ENCODE measurements at regions of chr10 and their contacts with region 1.

Region 1: GRCh38 chr10:12195603-12196506 is at the starts of genes CDC123 and NUDT5:
- DNase-seq: peak; percentile 81
- ATAC-seq: peak; percentile 94
- H3K4me3 ChIP-seq: peak within 1 kb of the TSS; percentile 84
- H3K27ac ChIP-seq: peak within 1 kb of the TSS; percentile 98
- H3K4me1 ChIP-seq: peaks cover 4% of the 10 kb centered on the region; the same call in 1 of the 2 replicates
- H3K27me3 ChIP-seq: no peaks in the 10 kb centered on the region
- CTCF ChIP-seq: peak in 1 of 3 experiments; percentile 9; a peak in 1 of 6 replicates
- EP300 ChIP-seq: 0 out of 4 replicates have a peak, but pooled peaks of 1 of the 2 experiments have one; percentile 28
- POLR2A ChIP-seq: peak; percentile 95
- RAD21 ChIP-seq: no peak
- polyA plus RNA-seq, gene CDC123: 162 to 226 TPM
- polyA plus RNA-seq, gene NUDT5: 293 to 345 TPM

Region 2: DNA sequence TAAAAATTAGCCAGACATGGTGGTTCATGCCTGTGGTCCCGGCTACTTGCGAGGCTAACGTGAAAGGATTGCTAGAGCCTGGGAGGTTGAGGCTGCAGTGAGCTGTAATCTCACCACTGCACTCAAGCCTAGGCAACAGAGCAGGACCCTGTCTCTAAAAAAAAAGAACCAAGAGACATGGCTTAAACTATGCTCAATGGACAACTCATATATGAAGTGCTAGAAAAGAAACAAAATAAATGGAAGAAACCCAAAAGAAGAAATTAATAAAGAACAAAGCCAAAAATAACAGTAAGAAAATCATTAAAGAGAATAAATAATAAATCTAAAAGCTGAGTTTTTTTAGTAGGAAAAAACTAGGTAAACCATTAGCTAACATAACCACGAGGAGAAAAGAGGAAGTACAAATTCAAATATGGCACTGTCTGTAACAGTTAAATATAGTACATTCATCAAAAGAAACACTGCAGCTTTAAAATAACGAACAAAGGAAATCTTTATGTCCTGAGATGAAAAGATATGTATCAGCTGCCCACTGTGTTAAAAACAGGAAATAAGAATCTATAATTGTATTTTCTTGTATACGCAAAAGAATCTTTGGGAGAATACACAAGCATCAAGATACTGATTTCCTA is 201.9 kb before region 1 on chr10:
- CTCF ChIA-PET with region 1: interaction called, 3 read pairs
- POLR2A ChIA-PET with region 1: interaction called, 6 read pairs
- RAD21 ChIA-PET with region 1: interaction called, 11 read pairs
- SMC1A ChIA-PET with region 1: interaction called, 5 read pairs
- in situ Hi-C with region 1: no loop called
- intact Hi-C with region 1: no loop called
- DNase-seq: peak; percentile 15
- ATAC-seq: peak; percentile 92
- H3K4me3 ChIP-seq: no peak overlapping the region
- H3K27ac ChIP-seq: peak overlapping the region; percentile 68
- H3K4me1 ChIP-seq: peaks cover 6% of the 10 kb centered on the region; the same call in 1 of the 2 replicates
- H3K27me3 ChIP-seq: no peaks in the 10 kb centered on the region
- CTCF ChIP-seq: no peak
- EP300 ChIP-seq: peak; percentile 54 to 71; a peak in 2 of 4 replicates
- POLR2A ChIP-seq: no peak
- RAD21 ChIP-seq: no peak

Region 3: DNA sequence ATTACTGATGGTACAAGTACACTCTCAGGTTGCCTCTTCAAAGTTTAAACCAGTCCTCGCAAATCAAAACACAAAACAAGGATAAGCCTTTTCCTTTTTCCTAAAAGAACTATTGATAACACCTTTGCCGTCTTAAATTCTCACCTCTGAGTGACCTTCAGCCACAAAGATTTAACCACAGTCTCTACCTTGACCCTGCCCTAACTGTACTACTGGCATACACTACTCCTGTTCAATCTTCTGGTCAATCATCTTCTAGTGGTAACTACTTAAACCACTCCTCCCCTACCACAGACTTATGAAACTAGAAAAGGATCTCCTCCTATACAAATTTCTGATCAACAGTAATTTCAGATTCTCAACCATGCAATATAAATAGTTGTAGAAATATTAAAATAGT is 168.3 kb before region 1 on chr10:
- CTCF ChIA-PET with region 1: no interaction called
- POLR2A ChIA-PET with region 1: no interaction called
- RAD21 ChIA-PET with region 1: no interaction called
- SMC1A ChIA-PET with region 1: interaction called, 3 read pairs
- in situ Hi-C with region 1: no loop called
- intact Hi-C with region 1: loop called (anchors 5 kb)
- DNase-seq: no peak
- ATAC-seq: peak; percentile 88
- H3K4me3 ChIP-seq: no peak overlapping the region
- H3K27ac ChIP-seq: no peak overlapping the region
- H3K4me1 ChIP-seq: peaks cover 17% of the 10 kb centered on the region
- H3K27me3 ChIP-seq: no peaks in the 10 kb centered on the region
- CTCF ChIP-seq: no peak
- EP300 ChIP-seq: no peak
- POLR2A ChIP-seq: no peak
- RAD21 ChIP-seq: no peak

Region 4: GRCh38 chr10:12129222-12130111 is 66.4 kb before region 1 on chr10 and contains the start of gene SEC61A2:
- CTCF ChIA-PET with region 1: interaction called, 4 read pairs
- POLR2A ChIA-PET with region 1: no interaction called
- RAD21 ChIA-PET with region 1: interaction called, 3 read pairs
- SMC1A ChIA-PET with region 1: interaction called, 10 read pairs
- in situ Hi-C with region 1: no loop called
- intact Hi-C with region 1: loop called (anchors 5 kb)
- DNase-seq: peak; percentile 53
- ATAC-seq: peak; percentile 93
- H3K4me3 ChIP-seq: peak within 1 kb of the TSS; percentile 87
- H3K27ac ChIP-seq: peak within 1 kb of the TSS; percentile 85
- H3K4me1 ChIP-seq: no peaks in the 10 kb centered on the region
- H3K27me3 ChIP-seq: no peaks in the 10 kb centered on the region
- CTCF ChIP-seq: no peak
- EP300 ChIP-seq: no peak
- POLR2A ChIP-seq: peak; percentile 91
- RAD21 ChIP-seq: no peak
- polyA plus RNA-seq, gene SEC61A2: 3.0 to 3.7 TPM

Measured in GM12878 (cell line).